ENCODE measurements at regions of chr16 and their contacts with region 1.

Region 1: GRCh38 chr16:12095275-12096156 is 119.0 kb downstream of the SNX29 start:
- DNase-seq: no peak
- H3K4me3 ChIP-seq: peak overlapping the region; percentile 29 to 37 (median 36)
- H3K27ac ChIP-seq: peak overlapping the region in 3 of 4 donors; percentile 23 to 56 (median 50)
- H3K4me1 ChIP-seq: peaks cover 36 to 54% (median 50%) of the 10 kb centered on the region in 4 donors
- H3K27me3 ChIP-seq: no peaks in the 10 kb centered on the region
- CTCF ChIP-seq: peak; percentile 84 to 96 (median 91)
- EP300 ChIP-seq: no peak
- POLR2A ChIP-seq: no peak

Region 2: DNA sequence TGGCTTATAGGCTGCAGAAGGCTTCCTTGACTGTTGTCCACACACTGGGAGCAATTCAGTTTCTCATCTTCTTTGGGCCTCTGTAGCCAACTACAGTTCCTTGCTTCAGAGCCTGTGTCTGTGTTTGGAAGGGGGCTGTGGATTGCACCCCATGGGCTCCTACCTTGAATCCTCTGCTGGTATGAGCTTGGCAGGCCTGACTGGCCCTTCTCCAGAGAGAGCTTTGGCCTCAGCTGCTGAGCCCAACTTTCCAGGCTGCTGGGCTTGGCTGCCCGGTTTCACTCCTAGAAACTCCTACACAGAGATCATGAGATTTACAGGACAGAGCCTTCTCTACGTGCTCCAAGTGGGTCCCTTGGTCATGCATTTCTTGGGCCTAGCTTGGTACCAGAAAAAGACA is 235.4 kb after region 1 on chr16:
- intact Hi-C with region 1: loop called (anchors 10 kb)
- DNase-seq: no peak
- H3K4me3 ChIP-seq: no peak overlapping the region
- H3K27ac ChIP-seq: no peak overlapping the region
- H3K4me1 ChIP-seq: peaks cover 21 to 35% (median 22%) of the 10 kb centered on the region in 4 donors
- H3K27me3 ChIP-seq: no peaks in the 10 kb centered on the region
- CTCF ChIP-seq: no peak
- EP300 ChIP-seq: no peak
- POLR2A ChIP-seq: no peak

Region 3: DNA sequence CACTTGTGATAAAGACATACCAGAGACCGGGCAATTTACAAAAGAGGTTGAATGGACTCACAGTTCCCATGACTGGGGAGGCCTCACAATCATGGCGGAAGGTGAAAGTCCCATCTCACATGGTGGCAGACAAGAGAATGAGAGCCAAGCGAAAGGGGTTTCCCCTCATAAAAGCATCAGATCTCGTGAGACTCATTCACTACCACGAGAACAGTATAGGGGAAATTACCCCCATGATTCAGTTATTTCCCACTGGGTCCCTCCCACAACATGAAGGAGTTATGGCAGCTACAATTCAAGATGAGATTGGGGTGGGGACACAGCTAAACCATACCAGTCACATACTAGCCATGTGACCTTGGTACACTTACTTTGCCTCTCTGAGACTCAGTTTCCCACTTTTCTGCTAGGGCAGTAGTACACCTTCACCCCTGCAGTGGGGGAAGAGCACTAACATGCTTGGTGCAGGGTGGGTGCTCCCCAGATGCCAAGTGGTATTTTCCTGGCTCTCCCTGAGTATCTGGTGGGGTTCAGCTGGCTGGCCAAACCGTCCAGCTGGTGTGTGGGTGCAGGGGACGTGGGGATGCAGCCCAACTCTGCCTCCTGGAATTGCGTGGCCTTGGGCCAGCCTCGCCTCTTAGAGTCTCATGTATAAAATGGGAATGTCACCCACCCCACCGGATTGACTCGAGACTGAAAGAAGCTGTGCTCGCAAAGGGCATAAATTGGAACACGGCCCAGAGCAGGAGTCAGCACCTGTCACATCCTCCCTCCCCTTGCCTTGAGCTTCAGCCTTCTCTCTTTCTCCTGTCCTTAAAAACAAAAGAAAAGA is 344.1 kb after region 1 on chr16:
- intact Hi-C with region 1: loop called (anchors 5 kb)
- DNase-seq: no peak
- H3K4me3 ChIP-seq: no peak overlapping the region
- H3K27ac ChIP-seq: no peak overlapping the region
- H3K4me1 ChIP-seq: peaks cover 0 to 4% (median 2%) of the 10 kb centered on the region in 4 donors
- H3K27me3 ChIP-seq: no peaks in the 10 kb centered on the region
- CTCF ChIP-seq: no peak
- EP300 ChIP-seq: no peak
- POLR2A ChIP-seq: no peak

Region 4: DNA sequence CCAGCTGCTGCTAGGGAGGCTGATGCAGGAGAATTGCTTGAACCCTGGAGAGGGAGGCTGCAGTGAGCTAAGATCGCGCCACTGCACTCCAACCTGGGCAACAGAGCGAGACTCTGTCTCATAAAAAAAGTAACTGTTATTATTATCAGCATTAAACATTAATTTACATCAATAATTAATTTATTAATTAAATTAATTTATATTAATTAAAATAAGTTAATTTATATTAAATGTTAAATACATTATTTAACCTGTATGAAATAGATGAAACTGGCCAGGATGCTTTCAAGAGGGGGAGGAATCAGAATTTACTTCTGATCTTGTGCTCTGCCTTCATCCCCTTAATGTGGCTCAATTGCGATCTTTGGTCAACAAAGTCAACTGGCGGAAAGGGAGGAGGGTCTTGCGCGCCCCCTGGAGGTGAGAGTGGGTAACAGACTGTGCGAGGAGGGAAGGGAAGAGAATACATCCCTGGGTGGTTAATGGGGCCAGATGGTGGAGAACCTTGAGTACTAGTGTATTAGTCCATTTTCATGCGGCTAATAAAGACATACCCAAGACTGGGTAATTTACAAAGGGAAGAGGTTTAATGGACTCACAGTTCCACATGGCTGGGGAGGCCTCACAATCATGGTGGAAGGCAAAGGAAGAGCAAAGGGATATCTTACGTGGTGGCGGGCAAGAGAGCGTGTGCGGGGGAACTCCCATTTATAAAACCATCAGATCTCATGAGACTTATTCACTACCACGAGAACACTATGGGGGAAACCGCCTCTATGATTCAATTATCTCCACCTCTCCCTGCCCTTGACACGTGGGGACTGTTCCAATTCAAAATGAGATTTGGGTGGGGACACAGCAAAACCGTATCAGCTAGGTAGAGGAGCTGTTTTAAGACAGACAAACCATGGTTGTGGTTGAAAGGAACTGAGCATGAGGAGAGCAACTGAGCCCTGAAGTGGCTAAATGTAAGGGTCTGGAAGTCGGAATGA is 723.9 kb after region 1 on chr16:
- intact Hi-C with region 1: loop called (anchors 2 kb)
- DNase-seq: no peak
- H3K4me3 ChIP-seq: no peak overlapping the region
- H3K27ac ChIP-seq: no peak overlapping the region
- H3K4me1 ChIP-seq: no peaks in the 10 kb centered on the region
- H3K27me3 ChIP-seq: peaks cover 0 to 9% (median 0%) of the 10 kb centered on the region in 4 donors
- CTCF ChIP-seq: peak; percentile 73 to 83 (median 75)
- EP300 ChIP-seq: no peak
- POLR2A ChIP-seq: no peak

Measured in esophagus muscularis mucosa (tissue), 4 donors.